ENCODE measurements at regions of chr7 and their contacts with region 1.

Region 1: GRCh38 chr7:78510580-78511188 is 712.1 kb downstream of the PHTF2 start:
- DNase-seq: peak; percentile 65
- H3K4me3 ChIP-seq: no peak overlapping the region
- H3K27ac ChIP-seq: no peak overlapping the region
- H3K4me1 ChIP-seq: no peaks in the 10 kb centered on the region
- H3K27me3 ChIP-seq: peaks cover 22% of the 10 kb centered on the region
- CTCF ChIP-seq: peak; percentile 77

Region 2: GRCh38 chr7:78134256-78134655 is 376.4 kb before region 1 on chr7:
- CTCF ChIA-PET with region 1: no interaction called
- POLR2A ChIA-PET with region 1: no interaction called
- intact Hi-C with region 1: loop called (anchors 5 kb)
- DNase-seq: peak; percentile 68
- H3K4me3 ChIP-seq: no peak overlapping the region
- H3K27ac ChIP-seq: no peak overlapping the region
- H3K4me1 ChIP-seq: peaks cover 1% of the 10 kb centered on the region
- H3K27me3 ChIP-seq: no peaks in the 10 kb centered on the region
- CTCF ChIP-seq: peak; percentile 68

Region 3: GRCh38 chr7:78176171-78176570 is 334.5 kb before region 1 on chr7:
- CTCF ChIA-PET with region 1: no interaction called
- POLR2A ChIA-PET with region 1: no interaction called
- intact Hi-C with region 1: no loop called
- DNase-seq: peak; percentile 93
- H3K4me3 ChIP-seq: peak overlapping the region; percentile 3
- H3K27ac ChIP-seq: no peak overlapping the region
- H3K4me1 ChIP-seq: peaks cover 56% of the 10 kb centered on the region
- H3K27me3 ChIP-seq: peaks cover under 1% of the 10 kb centered on the region
- CTCF ChIP-seq: no peak

Region 4: DNA sequence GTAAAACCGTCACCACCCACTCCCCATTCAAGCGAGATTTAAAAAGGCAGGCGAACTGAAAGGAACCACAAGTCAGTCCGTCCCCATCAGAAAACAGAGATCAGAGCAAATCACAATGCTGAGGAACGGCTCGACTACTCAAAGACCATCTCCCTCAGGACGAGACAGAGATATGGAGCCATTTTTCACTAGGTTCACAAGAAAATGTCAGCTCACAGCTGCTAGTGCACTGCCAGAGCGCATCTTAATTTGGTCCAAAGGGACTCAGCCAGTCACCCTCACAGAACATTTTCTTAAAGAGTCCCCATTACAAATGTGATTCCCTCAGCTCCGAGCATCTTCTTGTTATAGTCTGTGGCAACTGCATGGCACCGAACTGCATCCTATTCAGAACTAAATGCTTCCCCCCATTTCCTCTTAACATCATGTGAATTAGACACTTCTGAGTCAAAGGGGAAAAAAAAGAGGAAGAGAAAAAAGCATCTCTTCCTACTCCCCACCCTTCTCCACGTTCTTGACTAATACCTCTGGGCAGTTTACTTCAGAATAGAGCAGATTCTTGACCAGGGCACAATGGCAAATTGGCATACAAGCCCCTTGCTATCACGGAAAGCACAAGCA is 258.9 kb after region 1 on chr7:
- CTCF ChIA-PET with region 1: no interaction called
- POLR2A ChIA-PET with region 1: no interaction called
- intact Hi-C with region 1: loop called (anchors 10 kb)
- DNase-seq: no peak
- H3K4me3 ChIP-seq: no peak overlapping the region
- H3K27ac ChIP-seq: no peak overlapping the region
- H3K4me1 ChIP-seq: no peaks in the 10 kb centered on the region
- H3K27me3 ChIP-seq: peaks cover 92% of the 10 kb centered on the region
- CTCF ChIP-seq: no peak

Region 5: DNA sequence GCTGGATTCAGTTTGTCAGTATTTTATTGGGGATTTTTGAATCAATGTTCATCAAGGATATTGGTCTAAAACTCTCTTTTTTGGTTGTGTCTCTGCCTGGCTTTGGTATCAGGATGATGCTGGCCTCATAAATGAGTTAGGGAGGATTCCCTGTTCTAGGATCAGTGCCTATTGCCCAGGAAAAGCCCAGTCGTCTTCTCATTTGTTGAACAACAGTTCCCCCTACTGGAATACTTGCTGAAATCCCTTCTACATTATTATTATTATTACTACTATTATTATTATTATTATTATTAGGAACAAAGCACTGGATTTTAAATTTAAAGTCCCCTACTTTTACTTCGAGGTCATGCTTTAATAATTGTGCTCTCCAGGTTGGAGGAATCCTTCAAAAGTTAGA is 413.9 kb after region 1 on chr7:
- CTCF ChIA-PET with region 1: no interaction called
- POLR2A ChIA-PET with region 1: no interaction called
- intact Hi-C with region 1: loop called (anchors 1 kb)
- DNase-seq: peak; percentile 40
- H3K4me3 ChIP-seq: no peak overlapping the region
- H3K27ac ChIP-seq: no peak overlapping the region
- H3K4me1 ChIP-seq: no peaks in the 10 kb centered on the region
- H3K27me3 ChIP-seq: peaks cover 5% of the 10 kb centered on the region
- CTCF ChIP-seq: peak; percentile 49

Region 6: DNA sequence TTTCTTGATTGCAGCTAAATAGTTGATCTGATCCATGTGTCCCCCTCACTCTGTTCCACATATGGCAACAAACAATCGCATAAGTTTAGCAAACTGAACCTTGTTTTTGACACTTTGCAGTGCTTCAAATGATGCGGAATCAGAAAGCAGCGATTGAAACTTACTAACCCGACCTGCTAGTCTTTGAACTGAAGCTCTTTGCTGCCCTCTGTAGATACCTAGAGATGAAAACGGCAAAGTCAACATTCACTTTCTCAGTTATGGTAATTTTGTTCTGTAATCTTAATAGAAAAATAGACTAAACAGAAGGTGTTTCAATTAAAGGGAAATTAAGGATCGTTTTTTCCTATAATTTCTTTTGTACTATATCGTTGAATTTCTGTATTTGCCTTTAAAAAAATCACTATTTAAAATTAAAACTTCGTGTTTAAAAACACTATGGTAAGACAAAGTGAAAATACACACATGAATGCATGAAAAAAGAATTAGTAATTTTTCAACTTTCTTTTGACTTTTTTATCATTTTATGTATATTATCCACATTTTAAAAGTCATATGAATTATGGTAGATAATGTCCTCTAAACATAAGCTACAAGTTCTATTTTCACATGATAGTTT is 666.3 kb after region 1 on chr7:
- CTCF ChIA-PET with region 1: no interaction called
- POLR2A ChIA-PET with region 1: no interaction called
- intact Hi-C with region 1: loop called (anchors 2 kb)
- DNase-seq: peak; percentile 71
- H3K4me3 ChIP-seq: no peak overlapping the region
- H3K27ac ChIP-seq: no peak overlapping the region
- H3K4me1 ChIP-seq: no peaks in the 10 kb centered on the region
- H3K27me3 ChIP-seq: no peaks in the 10 kb centered on the region
- CTCF ChIP-seq: peak; percentile 73

Measured in A673 (cell line).